ENCODE measurements at regions of chr9 and their contacts with region 1.

Region 1: GRCh38 chr9:33076358-33077004 is at the start of gene SMU1:
- DNase-seq: peak; percentile 98 to 99
- H3K4me3 ChIP-seq: peak within 1 kb of the TSS; percentile 63 to 71 (median 68)
- H3K27ac ChIP-seq: peak within 1 kb of the TSS; percentile 89 to 95 (median 92)
- H3K4me1 ChIP-seq: peaks cover under 1 to 57% (median 32%) of the 10 kb centered on the region in 4 donors
- H3K27me3 ChIP-seq: no peaks in the 10 kb centered on the region
- CTCF ChIP-seq: no peak
- EP300 ChIP-seq: no peak
- POLR2A ChIP-seq: peak in 2 of 4 donors; percentile 5 to 72
- total RNA-seq, gene SMU1: 1.7 to 36.2 (median 10.0) TPM

Region 2: DNA sequence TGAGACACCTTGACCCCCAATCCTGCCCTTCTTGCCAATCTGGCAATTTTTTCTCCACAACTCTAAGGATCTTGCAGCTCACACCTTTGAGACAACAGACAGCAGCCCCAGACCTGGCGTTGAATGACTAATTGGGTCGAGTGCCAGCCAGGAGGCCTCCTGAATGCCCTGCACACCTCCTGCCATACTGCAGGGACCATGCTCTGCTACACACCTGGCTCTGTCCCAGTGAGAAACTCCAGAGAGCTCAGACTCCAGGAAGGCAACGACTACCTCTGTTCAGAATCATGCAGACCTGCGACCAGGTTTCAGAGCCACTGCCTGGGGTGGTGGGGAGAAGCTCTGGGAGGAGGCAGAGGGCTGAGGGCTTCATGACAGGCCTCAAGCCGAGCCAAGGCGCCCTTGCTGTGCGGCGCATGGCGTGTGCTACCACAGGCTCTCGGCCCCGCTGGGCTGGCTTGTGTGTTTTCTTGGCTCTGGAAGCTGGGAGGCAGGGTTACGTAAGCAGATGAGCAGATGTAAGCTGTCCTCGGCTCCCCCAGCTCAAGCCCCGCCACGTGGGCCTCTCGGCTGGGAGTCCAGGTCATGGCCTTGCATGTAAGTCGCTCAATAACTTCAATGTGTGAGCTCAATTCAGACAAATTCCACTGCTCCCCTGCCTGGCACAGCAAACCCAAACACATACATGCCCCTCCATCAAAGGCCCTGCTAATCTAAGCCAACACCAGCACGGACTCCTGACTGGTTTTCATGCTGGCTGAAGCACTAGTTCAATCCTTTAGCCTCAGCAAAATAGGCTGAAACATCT is 63.1 kb after region 1 on chr9:
- intact Hi-C with region 1: no loop called
- DNase-seq: peak; percentile 35 to 89
- H3K4me3 ChIP-seq: peak overlapping the region in 1 of 4 donors; percentile 22
- H3K27ac ChIP-seq: peak overlapping the region; percentile 7 to 76 (median 63)
- H3K4me1 ChIP-seq: peaks cover 82 to 100% (median 94%) of the 10 kb centered on the region in 4 donors
- H3K27me3 ChIP-seq: no peaks in the 10 kb centered on the region
- CTCF ChIP-seq: no peak
- EP300 ChIP-seq: no peak
- POLR2A ChIP-seq: no peak

Region 3: GRCh38 chr9:33170464-33171415 is 94.3 kb after region 1 on chr9:
- intact Hi-C with region 1: loop called (anchors 5 kb)
- DNase-seq: peak; percentile 38 to 74
- H3K4me3 ChIP-seq: no peak overlapping the region
- H3K27ac ChIP-seq: peak overlapping the region; percentile 46 to 92 (median 79)
- H3K4me1 ChIP-seq: peaks cover 16 to 45% (median 38%) of the 10 kb centered on the region in 4 donors
- H3K27me3 ChIP-seq: no peaks in the 10 kb centered on the region
- CTCF ChIP-seq: peak in 2 of 7 experiments; percentile 30 to 31
- EP300 ChIP-seq: no peak
- POLR2A ChIP-seq: no peak

Region 4: GRCh38 chr9:33225319-33226149 is 149.1 kb after region 1 on chr9:
- intact Hi-C with region 1: loop called (anchors 5 kb)
- DNase-seq: peak; percentile 70 to 90
- H3K4me3 ChIP-seq: no peak overlapping the region
- H3K27ac ChIP-seq: no peak overlapping the region
- H3K4me1 ChIP-seq: peaks cover 5 to 31% (median 12%) of the 10 kb centered on the region in 4 donors
- H3K27me3 ChIP-seq: no peaks in the 10 kb centered on the region
- CTCF ChIP-seq: peak in 5 of 7 experiments; percentile 48 to 86 (median 78)
- EP300 ChIP-seq: no peak
- POLR2A ChIP-seq: no peak

Measured in stomach (tissue), 19 donors.